CD14-positive monocyte (primary cell): ENCODE measurements at regions of chr13 and their contacts with region 1.

Region 1: DNA sequence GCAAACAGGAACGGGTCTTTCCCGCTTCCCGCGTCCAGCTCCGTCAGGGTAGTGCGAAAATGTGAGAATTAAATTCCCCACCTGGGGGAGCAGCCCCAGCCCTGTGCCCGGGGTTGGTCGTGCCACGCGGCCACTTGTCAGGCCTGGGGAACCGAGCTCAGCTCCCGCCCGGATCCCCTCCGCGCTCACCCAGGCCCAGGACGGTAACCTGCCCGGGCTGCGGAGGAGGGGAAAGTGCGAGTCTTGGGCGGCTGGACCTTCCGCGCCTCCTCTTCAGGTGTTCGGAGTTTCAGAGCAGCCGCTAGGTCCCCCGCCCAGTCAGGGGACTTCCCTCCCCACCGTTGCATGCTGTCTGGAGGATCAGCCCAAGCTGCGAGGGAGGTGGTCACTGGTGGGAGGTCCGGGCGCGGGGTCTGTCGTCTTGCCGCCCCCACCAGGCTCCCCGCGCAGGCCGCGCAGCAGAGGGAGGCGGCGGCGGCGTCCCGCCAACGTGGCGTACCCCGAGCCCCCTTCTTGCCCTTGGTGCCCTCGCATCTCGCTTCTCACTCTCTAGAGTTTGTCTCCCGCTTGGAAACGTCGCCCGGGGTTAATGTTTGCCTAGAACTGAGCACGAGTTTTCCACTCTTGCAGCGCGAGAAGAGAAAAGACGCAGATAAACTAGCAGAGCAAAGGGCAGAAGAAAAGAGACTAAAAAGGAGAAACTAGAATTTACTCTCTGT is 8.1 kb downstream of the URAD start:
- DNase-seq: no peak
- H3K4me3 ChIP-seq: no peak overlapping the region
- H3K4me3 Mint-ChIP-seq: peak overlapping the region; percentile 58 to 81
- H3K27ac ChIP-seq: no peak overlapping the region
- H3K27ac Mint-ChIP-seq: peak overlapping the region in 1 of 7 donors; percentile 61
- H3K4me1 ChIP-seq: peaks cover 8 to 12% of the 10 kb centered on the region in 2 donors
- H3K4me1 Mint-ChIP-seq: peaks cover 25% of the 10 kb centered on the region
- H3K27me3 ChIP-seq: peaks cover 67 to 78% of the 10 kb centered on the region in 2 donors
- H3K27me3 Mint-ChIP-seq: peaks cover 74 to 86% (median 80%) of the 10 kb centered on the region in 3 donors
- CTCF ChIP-seq: no peak

Region 2: GRCh38 chr13:26985285-26985878 is 995.1 kb before region 1 on chr13:
- intact Hi-C with region 1: loop called (anchors 5 to 10 kb)
- DNase-seq: peak; percentile 66 to 79 (median 76)
- H3K4me3 ChIP-seq: no peak overlapping the region
- H3K4me3 Mint-ChIP-seq: no peak overlapping the region
- H3K27ac ChIP-seq: no peak overlapping the region
- H3K27ac Mint-ChIP-seq: peak overlapping the region in 4 of 7 donors; percentile 0 to 73 (median 52)
- H3K4me1 ChIP-seq: peaks cover 14 to 15% of the 10 kb centered on the region in 2 donors
- H3K4me1 Mint-ChIP-seq: peaks cover 18% of the 10 kb centered on the region
- H3K27me3 ChIP-seq: no peaks in the 10 kb centered on the region
- H3K27me3 Mint-ChIP-seq: peaks cover 0 to 2% (median 1%) of the 10 kb centered on the region in 3 donors
- CTCF ChIP-seq: peak; percentile 86

Region 3: DNA sequence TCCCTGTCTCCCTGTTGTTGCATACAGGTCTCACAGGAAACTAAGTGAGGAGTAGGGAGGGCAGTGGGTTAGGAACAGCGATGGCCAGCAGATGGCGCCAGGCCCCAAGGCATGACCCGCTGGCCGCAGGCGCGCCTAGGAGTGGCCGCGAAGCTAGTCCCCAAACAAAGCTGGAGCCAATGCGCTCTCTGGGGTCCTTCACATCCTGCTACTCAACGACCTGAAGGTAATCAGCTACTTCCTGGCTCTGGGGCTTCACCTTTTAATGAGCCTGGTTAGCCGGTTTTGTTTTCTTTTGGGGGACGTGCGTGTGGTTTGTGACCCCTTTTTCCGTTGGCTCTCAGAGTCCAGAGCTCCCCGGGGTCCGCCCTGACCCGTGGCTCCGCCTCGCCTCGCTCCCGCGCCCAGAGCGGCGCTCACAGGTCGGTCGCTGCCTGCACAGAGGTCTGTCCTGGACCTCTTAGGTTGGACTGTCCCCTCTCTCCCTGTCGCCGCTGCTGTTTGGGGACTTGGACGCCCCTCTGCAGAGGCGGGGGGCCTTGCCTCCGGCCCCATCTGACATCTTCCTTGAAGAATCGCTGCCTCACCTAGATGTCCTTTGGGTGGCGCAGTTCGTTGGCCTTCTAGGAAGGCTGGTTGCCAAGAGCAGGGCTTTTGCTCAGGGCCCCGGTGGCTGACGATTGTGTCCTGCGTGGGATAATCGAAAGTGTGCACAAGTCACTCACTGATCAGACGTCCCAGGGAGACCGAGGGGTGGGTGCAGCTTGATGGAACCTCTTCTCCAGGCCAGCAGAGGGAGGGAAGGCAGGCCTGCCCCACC is 618.2 kb before region 1 on chr13:
- intact Hi-C with region 1: loop called (anchors 5 kb)
- DNase-seq: peak; percentile 69 to 76 (median 75)
- H3K4me3 ChIP-seq: peak overlapping the region in 2 of 3 experiments; percentile 13 to 69
- H3K4me3 Mint-ChIP-seq: peak overlapping the region; percentile 54 to 78
- H3K27ac ChIP-seq: no peak overlapping the region
- H3K27ac Mint-ChIP-seq: no peak overlapping the region
- H3K4me1 ChIP-seq: peaks cover 10 to 12% of the 10 kb centered on the region in 2 donors
- H3K4me1 Mint-ChIP-seq: peaks cover 8% of the 10 kb centered on the region
- H3K27me3 ChIP-seq: peaks cover 0 to 8% of the 10 kb centered on the region in 2 donors
- H3K27me3 Mint-ChIP-seq: peaks cover 7 to 27% (median 27%) of the 10 kb centered on the region in 3 donors
- CTCF ChIP-seq: peak; percentile 82

Region 4: GRCh38 chr13:27833206-27833605 is 147.2 kb before region 1 on chr13:
- intact Hi-C with region 1: loop called (anchors 2 to 5 kb)
- DNase-seq: no peak
- H3K4me3 ChIP-seq: no peak overlapping the region
- H3K4me3 Mint-ChIP-seq: peak overlapping the region in 1 of 2 donors; percentile 33
- H3K27ac ChIP-seq: no peak overlapping the region
- H3K27ac Mint-ChIP-seq: no peak overlapping the region
- H3K4me1 ChIP-seq: peaks cover 0 to 7% of the 10 kb centered on the region in 2 donors
- H3K4me1 Mint-ChIP-seq: peaks cover 5% of the 10 kb centered on the region
- H3K27me3 ChIP-seq: peaks cover 11 to 33% of the 10 kb centered on the region in 2 donors
- H3K27me3 Mint-ChIP-seq: peaks cover 29 to 49% (median 39%) of the 10 kb centered on the region in 3 donors
- CTCF ChIP-seq: no peak

Region 5: GRCh38 chr13:28031220-28031895 is 50.9 kb after region 1 on chr13:
- intact Hi-C with region 1: no loop called
- DNase-seq: peak; percentile 70 to 83 (median 73)
- H3K4me3 ChIP-seq: peak overlapping the region in 1 of 3 experiments; percentile 57
- H3K4me3 Mint-ChIP-seq: peak overlapping the region; percentile 75 to 83
- H3K27ac ChIP-seq: peak overlapping the region; percentile 70 to 83
- H3K27ac Mint-ChIP-seq: peak overlapping the region; percentile 86 to 95 (median 91)
- H3K4me1 ChIP-seq: peaks cover 37 to 48% of the 10 kb centered on the region in 2 donors
- H3K4me1 Mint-ChIP-seq: peaks cover 39% of the 10 kb centered on the region
- H3K27me3 ChIP-seq: no peaks in the 10 kb centered on the region
- H3K27me3 Mint-ChIP-seq: peaks cover 0 to 2% (median 0%) of the 10 kb centered on the region in 3 donors
- CTCF ChIP-seq: no peak